A549 (cell line): ENCODE measurements at regions of chr14 and their contacts with region 1.

Region 1: DNA sequence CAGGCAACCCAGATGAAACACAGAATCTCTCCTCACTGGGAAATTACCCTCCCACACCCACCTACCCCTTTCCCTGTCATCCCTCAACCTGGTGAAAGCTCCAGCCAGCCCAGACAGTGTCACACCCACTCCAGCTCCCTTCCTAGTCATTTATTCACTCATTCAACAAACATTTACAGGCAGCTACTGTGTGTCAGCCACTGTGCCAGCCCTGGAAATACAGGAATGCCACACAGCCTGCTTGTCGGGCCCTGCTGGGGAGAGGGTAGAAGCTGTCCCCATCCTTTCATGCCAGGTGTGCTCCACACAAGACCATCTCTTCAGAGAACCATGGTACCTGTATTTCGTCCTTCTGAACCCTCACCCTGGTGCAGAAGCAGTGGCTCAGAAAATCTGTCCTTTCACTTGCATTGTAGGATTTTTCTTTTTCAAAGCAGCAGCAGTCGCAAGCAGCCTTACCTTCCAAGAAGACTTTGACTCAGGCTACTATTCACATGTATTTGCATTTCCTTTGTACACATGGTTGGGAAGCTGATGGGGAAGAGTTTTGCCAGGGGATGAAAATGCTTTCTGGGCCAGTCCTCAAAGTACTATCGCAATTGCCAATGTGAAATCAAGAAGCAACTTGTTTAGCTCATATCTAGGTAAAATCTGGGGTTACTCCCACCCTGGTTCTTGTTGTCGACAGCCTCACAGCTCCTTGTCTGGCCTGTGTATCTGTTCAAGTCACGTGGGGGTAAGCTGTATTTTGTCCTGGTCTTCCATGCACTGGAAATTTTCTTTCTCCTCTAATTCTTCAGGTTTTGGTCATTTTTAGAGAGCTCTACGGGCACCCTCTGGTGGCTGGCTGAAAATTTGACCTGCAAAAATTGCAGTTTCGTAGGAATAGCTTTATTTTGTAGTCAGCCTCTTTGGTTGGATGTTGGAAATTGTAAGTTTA is 147.4 kb upstream of the EGLN3 start:
- DNase-seq: peak; percentile 35 to 49
- ATAC-seq: peak; percentile 73 to 84
- H3K4me3 ChIP-seq: no peak overlapping the region
- H3K27ac ChIP-seq: peak overlapping the region; percentile 29 to 61; a peak in 4 of 6 replicates
- H3K4me1 ChIP-seq: peaks cover 11% of the 10 kb centered on the region; the same call in 2 of the 3 replicates
- CTCF ChIP-seq: peak; percentile 91
- EP300 ChIP-seq: no peak
- POLR2A ChIP-seq: no peak
- RAD21 ChIP-seq: peak; percentile 91 to 95

Region 2: DNA sequence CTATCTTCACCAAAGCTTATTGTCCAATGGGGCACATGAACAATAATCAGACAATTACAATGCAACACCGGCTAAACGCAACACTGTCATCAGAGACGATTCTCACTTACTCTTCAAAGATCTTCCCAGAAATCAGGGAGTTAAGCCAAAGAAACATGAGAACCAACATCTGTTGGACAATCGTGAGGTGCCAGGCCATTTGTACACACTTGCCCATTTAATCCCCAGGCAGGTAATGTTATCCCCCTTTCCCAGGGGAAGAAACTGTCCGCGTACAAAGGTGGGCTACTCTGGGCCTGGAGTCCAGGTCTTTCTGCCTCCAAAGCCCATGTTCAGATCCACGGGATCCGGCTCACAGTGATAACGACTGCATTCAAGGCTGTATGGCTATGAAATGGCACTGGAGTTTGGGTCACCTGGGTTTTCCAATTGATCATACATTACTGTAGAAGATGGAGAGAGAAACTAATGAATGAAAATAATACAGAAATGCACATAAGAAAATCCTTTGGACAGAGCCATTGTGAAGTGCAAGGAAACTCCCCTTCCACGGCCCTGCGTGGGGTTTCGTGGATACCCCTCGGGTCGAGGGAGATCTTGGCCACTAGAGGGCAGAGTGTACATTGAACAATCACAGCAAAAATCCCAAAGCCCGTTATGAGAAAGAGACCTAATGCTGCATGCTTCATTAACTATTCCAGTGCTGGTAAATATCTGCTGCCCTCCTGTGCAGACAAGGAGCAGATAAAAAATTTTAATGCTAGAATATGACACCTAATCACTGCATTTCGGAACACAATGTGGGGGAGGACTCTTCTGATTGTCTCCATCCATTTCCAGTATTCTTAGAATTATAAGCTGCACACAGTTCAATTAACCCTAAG is 258.9 kb before region 1 on chr14:
- CTCF ChIA-PET with region 1: interaction called, 162 read pairs
- POLR2A ChIA-PET with region 1: no interaction called
- DNase-seq: peak; percentile 40 to 42
- ATAC-seq: peak; percentile 87
- H3K4me3 ChIP-seq: no peak overlapping the region
- H3K27ac ChIP-seq: no peak overlapping the region
- H3K4me1 ChIP-seq: 0 out of 3 replicates have a peak, but pooled peaks cover 5% of the 10 kb centered on the region
- CTCF ChIP-seq: peak; percentile 81
- EP300 ChIP-seq: no peak
- POLR2A ChIP-seq: no peak
- RAD21 ChIP-seq: peak; percentile 77 to 87

Region 3: GRCh38 chr14:33848706-33849454 is 249.4 kb before region 1 on chr14:
- CTCF ChIA-PET with region 1: interaction called, 162 read pairs
- POLR2A ChIA-PET with region 1: interaction called, 5 read pairs
- DNase-seq: peak; percentile 51 to 73
- ATAC-seq: peak; percentile 92 to 98
- H3K4me3 ChIP-seq: no peak overlapping the region
- H3K27ac ChIP-seq: no peak overlapping the region
- H3K4me1 ChIP-seq: no peaks in the 10 kb centered on the region
- CTCF ChIP-seq: peak; percentile 56
- EP300 ChIP-seq: no peak
- POLR2A ChIP-seq: no peak
- RAD21 ChIP-seq: peak; percentile 63 to 69

Region 4: GRCh38 chr14:33964599-33965317 is 133.6 kb before region 1 on chr14:
- CTCF ChIA-PET with region 1: interaction called, 10 read pairs
- POLR2A ChIA-PET with region 1: no interaction called
- DNase-seq: no peak
- ATAC-seq: peak; percentile 34 to 50; a peak in 2 of 6 replicates
- H3K4me3 ChIP-seq: no peak overlapping the region
- H3K27ac ChIP-seq: no peak overlapping the region
- H3K4me1 ChIP-seq: no peaks in the 10 kb centered on the region
- CTCF ChIP-seq: no peak
- EP300 ChIP-seq: no peak
- POLR2A ChIP-seq: no peak
- RAD21 ChIP-seq: peak in 1 of 2 experiments; percentile 27; a peak in 2 of 5 replicates

Region 5: DNA sequence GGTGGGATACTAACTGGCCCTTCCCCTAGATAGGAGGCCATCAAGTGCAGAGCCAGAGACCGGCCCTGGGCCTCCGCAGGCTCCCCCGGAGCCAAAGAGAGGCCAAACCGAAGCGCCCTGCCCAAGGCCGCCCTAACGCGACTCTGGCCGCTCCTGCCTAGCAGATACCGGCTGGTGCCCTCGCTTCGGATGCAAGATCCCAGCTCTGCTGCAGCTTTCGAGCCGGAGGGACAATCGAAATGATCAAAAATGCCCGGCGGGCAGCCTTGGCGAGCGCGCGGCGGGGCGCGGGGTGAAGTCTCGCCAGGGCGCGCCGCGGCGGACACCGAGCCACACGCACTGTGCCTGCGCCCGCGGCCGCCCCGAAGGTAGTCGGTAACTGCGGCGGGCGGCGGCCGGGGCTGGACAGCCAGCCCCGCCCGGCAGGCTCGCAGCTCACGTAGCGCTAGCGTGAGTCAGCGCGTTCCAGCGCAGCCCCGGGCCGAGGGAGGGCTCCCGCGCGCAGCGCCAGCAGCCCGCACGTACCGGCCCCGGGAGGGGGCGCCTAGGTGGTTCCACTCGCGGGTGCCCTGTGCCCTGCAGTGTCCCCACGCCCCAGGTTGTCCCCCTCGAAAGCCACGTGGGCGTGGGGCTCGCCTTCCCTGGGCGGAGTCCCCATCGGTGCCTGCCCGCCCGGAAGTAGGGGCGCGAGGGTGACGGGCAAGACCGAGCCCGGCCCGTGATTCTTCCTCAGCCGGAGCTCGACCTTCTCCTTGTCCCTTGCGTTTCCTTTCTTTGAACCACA is 38.3 kb before region 1 on chr14:
- CTCF ChIA-PET with region 1: interaction called, 62 read pairs
- POLR2A ChIA-PET with region 1: interaction called, 4 read pairs
- DNase-seq: peak; percentile 73 to 82
- ATAC-seq: peak; percentile 90 to 96
- H3K4me3 ChIP-seq: peak overlapping the region; percentile 52
- H3K27ac ChIP-seq: peak overlapping the region; percentile 90 to 95
- H3K4me1 ChIP-seq: peaks cover 41% of the 10 kb centered on the region
- CTCF ChIP-seq: peak; percentile 41
- EP300 ChIP-seq: no peak
- POLR2A ChIP-seq: peak; percentile 60
- RAD21 ChIP-seq: peak in 1 of 2 experiments; percentile 56; a peak in 3 of 5 replicates

Region 6: GRCh38 chr14:34081576-34082136 is 16.7 kb before region 1 on chr14:
- CTCF ChIA-PET with region 1: interaction called, 31 read pairs
- POLR2A ChIA-PET with region 1: no interaction called
- DNase-seq: peak; percentile 56 to 59
- ATAC-seq: peak; percentile 57 to 67
- H3K4me3 ChIP-seq: no peak overlapping the region
- H3K27ac ChIP-seq: peak overlapping the region; percentile 54 to 77
- H3K4me1 ChIP-seq: peaks cover 50% of the 10 kb centered on the region
- CTCF ChIP-seq: no peak
- EP300 ChIP-seq: no peak
- POLR2A ChIP-seq: no peak
- RAD21 ChIP-seq: no peak